Vagina (tissue), 2 donors: ENCODE measurements at regions of chr6 and their contacts with region 1.

Region 1: DNA sequence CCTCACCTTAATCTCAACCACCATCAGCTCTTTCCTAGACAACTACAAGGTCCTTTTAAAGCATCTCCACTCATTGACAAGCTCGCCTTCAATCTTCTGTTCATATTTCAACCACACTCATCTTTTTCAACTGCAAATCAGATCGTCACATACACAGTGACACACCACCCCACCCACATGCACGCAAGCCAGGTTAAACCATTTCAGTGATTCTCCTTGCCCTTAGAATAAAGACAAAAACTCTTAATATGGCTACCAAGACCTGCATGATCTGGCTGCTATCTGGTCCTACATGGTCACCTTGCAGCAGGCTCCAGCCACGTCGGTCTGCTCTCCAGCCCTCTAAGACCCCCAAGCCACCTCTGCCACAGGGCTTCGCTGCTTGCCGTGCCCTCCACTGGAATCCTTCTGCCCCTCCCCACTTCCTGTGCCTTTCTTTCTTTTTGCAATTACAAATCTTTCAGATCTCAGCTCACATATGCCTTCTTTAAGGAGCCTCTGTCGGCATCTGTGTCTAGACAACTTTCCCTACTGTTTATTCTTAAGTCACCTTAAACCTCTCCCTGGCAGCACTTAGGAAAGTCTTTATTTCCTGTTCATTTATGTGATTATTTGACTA is 507.3 kb upstream of the ARID1B start:
- DNase-seq: no peak
- H3K4me3 ChIP-seq: no peak overlapping the region
- H3K27ac ChIP-seq: no peak overlapping the region
- H3K4me1 ChIP-seq: no peaks in the 10 kb centered on the region
- H3K27me3 ChIP-seq: no peaks in the 10 kb centered on the region
- CTCF ChIP-seq: no peak
- POLR2A ChIP-seq: no peak

Region 2: GRCh38 chr6:155628306-155628705 is 641.6 kb before region 1 on chr6:
- intact Hi-C with region 1: loop called (anchors 5 kb)
- DNase-seq: no peak
- H3K4me3 ChIP-seq: no peak overlapping the region
- H3K27ac ChIP-seq: no peak overlapping the region
- H3K4me1 ChIP-seq: no peaks in the 10 kb centered on the region
- H3K27me3 ChIP-seq: no peaks in the 10 kb centered on the region
- CTCF ChIP-seq: no peak
- POLR2A ChIP-seq: no peak